IMR-90 (cell line): ENCODE measurements at regions of chr14 and their contacts with region 1.

Region 1: DNA sequence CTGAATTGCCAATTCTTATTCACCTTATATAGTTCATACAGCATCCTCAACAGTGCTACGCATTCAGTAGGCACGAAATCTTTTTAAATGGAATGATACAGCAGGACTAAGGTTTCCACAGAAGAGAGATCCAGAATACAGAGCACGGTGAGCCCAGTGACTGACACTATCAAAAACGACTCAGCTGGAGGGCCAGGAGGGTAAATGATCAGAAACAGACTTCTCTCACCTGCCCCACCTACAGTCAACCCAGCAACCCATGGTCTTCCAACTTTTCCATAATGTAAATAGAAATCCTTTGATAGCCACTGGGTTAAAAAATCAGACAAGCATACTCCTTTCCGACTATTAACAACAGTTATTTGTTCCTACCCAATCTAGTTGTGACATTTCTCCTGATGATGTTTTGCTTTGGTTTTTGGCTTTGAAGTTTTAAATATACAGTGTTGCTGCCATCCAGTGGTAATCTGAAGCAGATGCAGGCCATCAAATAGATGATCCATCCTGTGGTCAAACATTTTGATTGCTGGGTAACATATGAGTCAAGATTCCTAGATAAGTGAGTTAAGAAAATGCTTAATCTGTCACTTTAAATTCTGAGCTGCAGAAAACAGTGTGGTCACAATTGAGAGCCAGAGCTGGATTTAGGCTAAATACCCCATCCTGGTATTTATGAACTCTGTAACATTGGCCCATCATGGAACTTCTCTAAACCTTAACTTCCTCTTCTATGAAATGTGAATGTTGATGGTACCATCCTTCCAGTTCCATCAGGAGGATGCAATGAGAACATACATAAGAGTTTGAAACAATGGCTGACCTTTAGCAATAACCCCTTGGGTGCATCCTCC is 42.0 kb downstream of the GPHB5 start:
- DNase-seq: peak; percentile 64
- ATAC-seq: peak; percentile 85
- H3K4me3 ChIP-seq: no peak overlapping the region
- H3K27ac ChIP-seq: no peak overlapping the region
- H3K4me1 ChIP-seq: no peaks in the 10 kb centered on the region
- H3K27me3 ChIP-seq: no peaks in the 10 kb centered on the region
- CTCF ChIP-seq: peak; percentile 88
- POLR2A ChIP-seq: no peak
- RAD21 ChIP-seq: peak; percentile 85

Region 2: DNA sequence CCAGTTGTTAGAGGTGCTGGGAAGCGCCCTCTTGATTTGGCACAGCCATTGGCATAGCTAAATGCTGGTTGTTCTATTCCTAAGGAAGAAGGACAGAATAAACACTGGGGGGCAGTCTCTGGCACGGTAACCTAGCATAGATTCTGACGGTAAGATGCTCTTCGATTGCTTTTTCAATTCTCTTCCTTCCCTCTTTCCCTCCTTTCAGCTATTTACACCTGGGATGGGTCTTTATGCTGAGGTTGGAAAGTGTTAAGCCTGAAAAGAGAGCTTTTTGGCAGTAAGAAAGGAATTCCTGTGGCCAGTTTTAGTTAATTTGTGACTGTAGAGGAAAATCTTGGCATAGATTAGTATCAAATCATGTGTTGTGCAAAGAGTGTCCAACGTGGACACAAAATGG is 1351.7 kb before region 1 on chr14:
- CTCF ChIA-PET with region 1: no interaction called
- POLR2A ChIA-PET with region 1: no interaction called
- dilution Hi-C with region 1: no loop called
- in situ Hi-C with region 1: no loop called
- intact Hi-C with region 1: loop called (anchors 10 kb)
- DNase-seq: peak; percentile 29
- ATAC-seq: no peak
- H3K4me3 ChIP-seq: no peak overlapping the region
- H3K27ac ChIP-seq: no peak overlapping the region
- H3K4me1 ChIP-seq: peaks cover 25% of the 10 kb centered on the region
- H3K27me3 ChIP-seq: no peaks in the 10 kb centered on the region
- CTCF ChIP-seq: peak; percentile 40
- POLR2A ChIP-seq: no peak
- RAD21 ChIP-seq: peak; percentile 55

Region 3: DNA sequence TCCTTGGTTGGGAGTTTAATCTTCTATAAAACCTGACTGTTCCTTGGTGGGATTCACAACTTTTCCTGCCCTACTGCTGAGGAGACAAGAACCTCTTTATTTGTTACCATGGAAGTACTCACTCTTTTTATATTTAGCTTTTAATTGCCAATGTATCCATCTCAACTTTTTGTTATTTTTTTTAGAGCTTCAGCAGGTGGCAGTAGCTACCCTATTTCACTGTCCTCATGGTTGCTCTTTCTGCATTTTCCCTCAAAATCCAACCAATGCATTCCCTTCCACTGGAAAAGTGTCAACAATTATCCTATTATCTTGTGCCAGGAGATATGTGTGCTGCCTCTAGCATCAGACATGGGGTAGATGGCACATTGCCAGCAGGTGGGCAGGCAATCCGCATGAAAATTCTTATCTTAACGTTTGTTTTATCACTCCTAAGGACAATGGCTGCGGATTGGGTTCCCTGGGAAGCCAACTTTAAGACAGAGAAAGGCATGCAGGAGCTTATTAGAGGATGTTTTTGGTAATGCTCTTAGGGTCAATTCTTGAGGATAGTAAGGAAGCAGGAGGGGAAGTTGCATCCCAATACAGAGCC is 1108.1 kb before region 1 on chr14:
- CTCF ChIA-PET with region 1: no interaction called
- POLR2A ChIA-PET with region 1: no interaction called
- dilution Hi-C with region 1: no loop called
- in situ Hi-C with region 1: loop called (anchors 5 kb)
- intact Hi-C with region 1: loop called (anchors 1 kb)
- DNase-seq: no peak
- ATAC-seq: no peak
- H3K4me3 ChIP-seq: no peak overlapping the region
- H3K27ac ChIP-seq: no peak overlapping the region
- H3K4me1 ChIP-seq: no peaks in the 10 kb centered on the region
- H3K27me3 ChIP-seq: peaks cover 10% of the 10 kb centered on the region
- CTCF ChIP-seq: peak; percentile 26; the same call in 1 of the 2 replicates
- POLR2A ChIP-seq: no peak
- RAD21 ChIP-seq: peak; percentile 33; the same call in 1 of the 2 replicates

Region 4: DNA sequence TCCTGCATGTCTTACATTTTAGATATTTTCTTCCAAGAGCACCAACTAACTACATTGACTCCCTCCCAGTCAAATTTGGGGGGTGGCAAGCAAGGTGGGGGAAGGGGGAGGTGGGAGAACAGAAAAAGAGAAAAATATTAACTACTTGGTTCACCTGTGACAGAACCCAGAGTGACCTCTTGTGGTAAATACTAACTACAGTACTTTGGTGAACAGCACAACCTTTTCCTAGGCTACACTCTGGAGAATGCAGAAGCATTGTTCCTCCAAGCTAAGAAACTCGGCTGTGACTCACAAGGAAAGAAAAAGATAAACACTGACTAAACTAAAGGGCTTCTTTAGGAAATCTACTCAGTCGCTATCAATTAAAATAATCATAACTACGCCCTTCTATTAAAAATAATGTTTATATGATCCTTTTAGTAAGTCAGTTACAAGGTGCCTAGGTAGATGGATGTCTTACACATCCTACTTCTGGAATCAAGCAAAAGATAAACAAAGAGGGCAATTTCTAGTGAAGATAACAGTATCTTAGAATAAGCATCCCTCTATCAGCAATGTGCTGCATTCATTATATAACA is 236.8 kb before region 1 on chr14:
- CTCF ChIA-PET with region 1: no interaction called
- POLR2A ChIA-PET with region 1: no interaction called
- dilution Hi-C with region 1: no loop called
- in situ Hi-C with region 1: no loop called
- intact Hi-C with region 1: loop called (anchors 2 kb)
- DNase-seq: peak; percentile 84
- ATAC-seq: peak; percentile 98
- H3K4me3 ChIP-seq: no peak overlapping the region
- H3K27ac ChIP-seq: no peak overlapping the region
- H3K4me1 ChIP-seq: no peaks in the 10 kb centered on the region
- H3K27me3 ChIP-seq: peaks cover 8% of the 10 kb centered on the region
- CTCF ChIP-seq: peak; percentile 47
- POLR2A ChIP-seq: no peak
- RAD21 ChIP-seq: peak; percentile 62

Region 5: DNA sequence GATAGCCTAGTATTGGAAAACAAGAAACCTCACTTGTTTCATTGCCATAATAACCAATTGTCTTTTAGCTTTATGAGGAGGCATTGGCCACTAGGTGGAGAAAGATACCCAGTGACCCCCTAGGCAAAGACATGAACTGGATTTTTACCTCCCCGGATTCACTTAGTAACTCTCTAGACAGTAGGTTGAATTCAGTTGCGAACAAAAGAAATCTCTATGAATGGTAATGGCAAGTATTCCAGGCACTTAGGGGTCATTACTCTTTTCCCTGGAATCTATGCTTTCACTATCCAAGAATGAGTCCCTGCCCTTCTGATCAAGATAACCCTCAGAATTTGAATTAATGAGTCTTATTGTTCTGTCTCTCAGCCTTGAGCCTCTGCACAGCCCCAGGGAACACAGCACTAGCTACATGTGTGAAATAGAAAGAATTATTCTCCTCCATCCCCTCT is 101.9 kb before region 1 on chr14:
- CTCF ChIA-PET with region 1: interaction called, 18 read pairs
- POLR2A ChIA-PET with region 1: no interaction called
- dilution Hi-C with region 1: no loop called
- in situ Hi-C with region 1: loop called (anchors 5 kb)
- intact Hi-C with region 1: loop called (anchors 1 kb)
- DNase-seq: peak; percentile 76
- ATAC-seq: peak; percentile 87
- H3K4me3 ChIP-seq: no peak overlapping the region
- H3K27ac ChIP-seq: no peak overlapping the region
- H3K4me1 ChIP-seq: peaks cover 3% of the 10 kb centered on the region; the same call in 1 of the 2 replicates
- H3K27me3 ChIP-seq: peaks cover 2% of the 10 kb centered on the region; the same call in 1 of the 2 replicates
- CTCF ChIP-seq: peak; percentile 68
- POLR2A ChIP-seq: no peak
- RAD21 ChIP-seq: peak; percentile 74